Endothelial cell of umbilical vein (primary cell): ENCODE measurements at regions of chr17 and their contacts with region 1.

Region 1: GRCh38 chr17:54172096-54172984 is 349.6 kb downstream of the KIF2B start:
- DNase-seq: no peak
- H3K4me3 ChIP-seq: no peak overlapping the region
- H3K27ac ChIP-seq: no peak overlapping the region
- H3K4me1 ChIP-seq: no peaks in the 10 kb centered on the region
- H3K27me3 ChIP-seq: no peaks in the 10 kb centered on the region
- CTCF ChIP-seq: no peak
- POLR2A ChIP-seq: no peak

Region 2: DNA sequence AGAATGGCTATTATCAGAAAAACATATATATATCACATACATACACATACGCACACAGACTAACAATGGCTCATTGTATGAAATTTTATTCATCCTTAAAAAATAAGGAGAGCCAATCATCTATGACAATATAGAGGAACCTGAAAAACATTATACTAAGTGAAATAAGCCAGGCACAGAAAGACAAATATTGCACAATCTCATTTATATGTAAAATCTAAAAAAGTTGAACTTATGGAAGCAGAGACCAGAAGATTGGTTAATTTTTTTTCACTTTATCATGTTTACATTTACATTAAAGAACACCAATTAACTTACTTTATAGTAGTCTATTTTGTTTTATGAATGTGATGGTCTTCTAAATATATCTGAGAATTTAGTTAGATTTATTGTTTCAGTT is 150.9 kb before region 1 on chr17:
- CTCF ChIA-PET with region 1: no interaction called
- POLR2A ChIA-PET with region 1: no interaction called
- dilution Hi-C with region 1: no loop called
- intact Hi-C with region 1: loop called (anchors 5 kb)
- DNase-seq: no peak
- H3K4me3 ChIP-seq: no peak overlapping the region
- H3K27ac ChIP-seq: no peak overlapping the region
- H3K4me1 ChIP-seq: no peaks in the 10 kb centered on the region
- H3K27me3 ChIP-seq: no peaks in the 10 kb centered on the region
- CTCF ChIP-seq: no peak
- POLR2A ChIP-seq: no peak